Ovary (tissue), 10 donors: ENCODE measurements at regions of chr2 and their contacts with region 1.

Region 1: GRCh38 chr2:231706731-231707624 is 1.3 kb upstream of the PTMA start:
- DNase-seq: peak; percentile 98 to 99 (median 98)
- H3K4me3 ChIP-seq: peak overlapping the region; percentile 81
- H3K27ac ChIP-seq: peak overlapping the region; percentile 100
- H3K4me1 ChIP-seq: peaks cover 12% of the 10 kb centered on the region
- H3K27me3 ChIP-seq: no peaks in the 10 kb centered on the region
- CTCF ChIP-seq: peak; percentile 81 to 95 (median 86)
- EP300 ChIP-seq: peak; percentile 3
- POLR2A ChIP-seq: peak; percentile 95

Region 2: GRCh38 chr2:231522799-231523180 is 184.2 kb before region 1 on chr2:
- intact Hi-C with region 1: loop called in 1 of 4 experiments (anchors 10 kb)
- DNase-seq: peak in 1 of 5 donors; percentile 36
- H3K4me3 ChIP-seq: no peak overlapping the region
- H3K27ac ChIP-seq: no peak overlapping the region
- H3K4me1 ChIP-seq: peaks cover 3% of the 10 kb centered on the region
- H3K27me3 ChIP-seq: no peaks in the 10 kb centered on the region
- CTCF ChIP-seq: no peak
- EP300 ChIP-seq: no peak
- POLR2A ChIP-seq: no peak

Region 3: GRCh38 chr2:231662028-231662810 is 44.8 kb before region 1 on chr2:
- intact Hi-C with region 1: loop called in 1 of 4 experiments (anchors 5 kb)
- DNase-seq: peak; percentile 96 to 100 (median 98)
- H3K4me3 ChIP-seq: peak overlapping the region; percentile 47
- H3K27ac ChIP-seq: peak overlapping the region; percentile 69 to 85
- H3K4me1 ChIP-seq: peaks cover 5% of the 10 kb centered on the region
- H3K27me3 ChIP-seq: no peaks in the 10 kb centered on the region
- CTCF ChIP-seq: peak in 2 of 3 donors; percentile 19 to 44
- EP300 ChIP-seq: peak; percentile 4
- POLR2A ChIP-seq: peak; percentile 94

Region 4: GRCh38 chr2:231696007-231696371 is 11.0 kb before region 1 on chr2:
- intact Hi-C with region 1: no loop called
- DNase-seq: peak in 1 of 5 donors; percentile 55
- H3K4me3 ChIP-seq: no peak overlapping the region
- H3K27ac ChIP-seq: no peak overlapping the region
- H3K4me1 ChIP-seq: no peaks in the 10 kb centered on the region
- H3K27me3 ChIP-seq: no peaks in the 10 kb centered on the region
- CTCF ChIP-seq: no peak
- EP300 ChIP-seq: no peak
- POLR2A ChIP-seq: no peak